Activated CD8-positive, alpha-beta T cell treated with anti-CD3 and anti-CD28 coated beads for 36 hours (primary cell): ENCODE measurements at regions of chr10 and their contacts with region 1.

Region 1: GRCh38 chr10:91201213-91201996 is 19.1 kb upstream of the PCGF5 start:
- DNase-seq: peak; percentile 77
- ATAC-seq: peak; percentile 65
- H3K4me3 Mint-ChIP-seq: peak overlapping the region; percentile 64
- H3K27ac Mint-ChIP-seq: peak overlapping the region; percentile 85
- H3K4me1 Mint-ChIP-seq: peaks cover 80% of the 10 kb centered on the region
- H3K27me3 Mint-ChIP-seq: no peaks in the 10 kb centered on the region
- CTCF ChIP-seq: no peak

Region 2: DNA sequence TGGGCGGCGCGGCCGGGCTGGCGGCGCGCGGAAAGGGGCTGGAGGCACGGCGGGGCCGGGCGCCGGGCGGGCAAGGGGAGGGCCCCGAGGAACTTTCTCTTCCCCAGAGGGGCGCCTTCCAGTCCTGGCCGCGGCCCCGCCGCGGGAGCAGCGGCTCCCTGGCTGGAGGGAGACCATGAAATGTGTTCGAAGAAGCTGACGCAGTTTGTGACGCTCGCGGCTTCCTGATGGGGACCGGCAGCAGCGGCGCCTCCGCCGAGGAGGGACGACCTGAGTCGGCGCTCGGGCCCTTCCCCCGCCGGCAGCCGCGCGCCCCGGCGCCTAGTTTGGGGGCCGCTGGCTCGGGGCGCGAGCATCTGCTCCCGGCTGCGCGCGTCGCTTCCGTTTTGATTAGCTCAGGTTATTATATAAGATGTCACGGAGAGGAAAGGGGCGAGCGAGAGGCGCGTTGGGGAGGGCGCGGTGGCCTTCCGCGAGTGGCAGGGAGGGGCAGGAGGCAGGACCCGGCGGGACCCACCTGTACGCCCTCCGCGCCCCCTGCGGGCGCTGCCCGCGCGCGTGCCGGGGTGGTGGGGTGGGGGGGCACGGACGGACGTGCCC is 38.0 kb before region 1 on chr10:
- CTCF ChIA-PET with region 1: interaction called, 5 read pairs
- POLR2A ChIA-PET with region 1: interaction called, 17 read pairs
- intact Hi-C with region 1: loop called (anchors 5 kb)
- DNase-seq: peak; percentile 84
- ATAC-seq: peak; percentile 67
- H3K4me3 Mint-ChIP-seq: peak overlapping the region; percentile 82
- H3K27ac Mint-ChIP-seq: peak overlapping the region; percentile 93
- H3K4me1 Mint-ChIP-seq: peaks cover 46% of the 10 kb centered on the region
- H3K27me3 Mint-ChIP-seq: no peaks in the 10 kb centered on the region
- CTCF ChIP-seq: no peak

Region 3: DNA sequence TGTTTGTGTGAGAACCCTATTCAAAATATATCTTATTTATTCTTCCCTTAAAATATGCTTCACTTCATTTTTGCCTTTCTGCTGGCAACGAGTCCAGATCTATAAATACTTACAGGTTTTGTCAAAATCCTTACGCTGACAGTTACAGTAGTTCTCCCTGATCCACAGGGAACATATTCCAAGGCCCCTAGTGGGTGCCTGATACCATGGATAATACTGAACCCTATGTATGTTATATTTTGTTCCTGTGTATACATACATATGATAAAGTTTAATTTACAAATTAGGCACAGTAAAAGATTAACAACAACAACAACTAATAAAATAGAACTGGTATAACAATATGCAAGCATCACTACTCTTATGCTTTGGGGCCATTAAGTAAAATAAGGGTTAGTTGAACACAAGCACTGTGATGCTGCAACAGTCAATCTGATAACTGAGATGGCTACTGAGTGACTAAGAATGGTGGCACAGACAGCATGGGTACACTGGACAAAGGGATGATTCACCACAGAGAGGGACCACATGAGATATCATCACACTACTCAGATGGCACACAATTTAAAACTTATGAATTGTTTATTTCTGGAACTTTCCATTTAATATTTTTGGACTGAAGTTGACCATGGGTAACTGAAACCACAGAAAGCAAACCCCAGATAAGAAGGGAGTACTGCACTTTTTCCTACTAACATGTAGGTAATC is 10.4 kb before region 1 on chr10:
- CTCF ChIA-PET with region 1: no interaction called
- POLR2A ChIA-PET with region 1: no interaction called
- intact Hi-C with region 1: no loop called
- DNase-seq: peak; percentile 35
- ATAC-seq: peak; percentile 61
- H3K4me3 Mint-ChIP-seq: no peak overlapping the region
- H3K27ac Mint-ChIP-seq: peak overlapping the region; percentile 65
- H3K4me1 Mint-ChIP-seq: peaks cover 73% of the 10 kb centered on the region
- H3K27me3 Mint-ChIP-seq: no peaks in the 10 kb centered on the region
- CTCF ChIP-seq: no peak

Region 4: DNA sequence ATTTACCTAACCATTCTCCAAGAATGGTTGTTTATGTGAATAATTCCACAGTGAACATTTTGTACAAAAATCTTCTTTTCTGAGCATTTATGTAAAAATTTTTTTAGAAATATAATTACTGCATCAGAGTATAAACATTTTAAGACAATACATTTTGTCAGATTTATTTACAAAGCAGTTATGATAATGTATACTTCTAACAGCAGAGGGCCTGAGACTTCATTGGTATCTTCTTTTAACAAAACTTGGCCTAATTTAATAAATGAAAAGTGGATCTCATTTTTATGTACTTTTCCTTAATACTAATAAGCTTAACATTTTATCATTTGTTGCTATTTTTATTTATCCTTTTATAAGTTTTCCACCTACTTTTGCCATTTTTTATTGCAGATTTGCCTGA is 278.2 kb after region 1 on chr10:
- CTCF ChIA-PET with region 1: no interaction called
- POLR2A ChIA-PET with region 1: no interaction called
- intact Hi-C with region 1: no loop called
- DNase-seq: no peak
- ATAC-seq: no peak
- H3K4me3 Mint-ChIP-seq: no peak overlapping the region
- H3K27ac Mint-ChIP-seq: no peak overlapping the region
- H3K4me1 Mint-ChIP-seq: no peaks in the 10 kb centered on the region
- H3K27me3 Mint-ChIP-seq: no peaks in the 10 kb centered on the region
- CTCF ChIP-seq: no peak